ENCODE measurements at regions of chr14 and their contacts with region 1.

Region 1: DNA sequence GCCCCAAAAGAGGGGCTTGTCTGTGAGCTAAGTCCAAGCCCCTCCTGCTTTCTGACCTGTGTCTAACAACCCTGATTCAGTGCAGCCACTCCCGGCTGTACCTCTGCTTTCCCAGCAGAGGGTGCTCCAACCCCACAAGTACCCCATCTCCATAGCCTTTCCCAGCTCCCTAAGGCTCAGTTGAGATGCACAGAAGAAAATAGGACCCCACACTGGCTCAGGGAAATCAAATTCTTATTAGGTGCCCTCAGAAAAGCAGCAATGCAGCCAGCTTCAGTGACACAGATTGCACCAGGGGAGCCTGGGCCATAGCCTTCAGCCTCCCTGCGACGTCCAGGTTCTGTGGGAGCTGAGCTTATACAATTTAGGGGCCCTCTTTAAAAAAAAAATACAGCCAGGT is 49.9 kb downstream of the LRRC74A start:
- DNase-seq: peak; percentile 86
- H3K4me3 ChIP-seq: no peak overlapping the region; a peak in 1 of 4 replicates
- H3K27ac ChIP-seq: no peak overlapping the region
- H3K4me1 ChIP-seq: no peaks in the 10 kb centered on the region
- H3K27me3 ChIP-seq: 0 out of 2 replicates have a peak, but pooled peaks cover 4% of the 10 kb centered on the region
- CTCF ChIP-seq: peak; percentile 97
- EP300 ChIP-seq: no peak
- RAD21 ChIP-seq: peak; percentile 100

Region 2: DNA sequence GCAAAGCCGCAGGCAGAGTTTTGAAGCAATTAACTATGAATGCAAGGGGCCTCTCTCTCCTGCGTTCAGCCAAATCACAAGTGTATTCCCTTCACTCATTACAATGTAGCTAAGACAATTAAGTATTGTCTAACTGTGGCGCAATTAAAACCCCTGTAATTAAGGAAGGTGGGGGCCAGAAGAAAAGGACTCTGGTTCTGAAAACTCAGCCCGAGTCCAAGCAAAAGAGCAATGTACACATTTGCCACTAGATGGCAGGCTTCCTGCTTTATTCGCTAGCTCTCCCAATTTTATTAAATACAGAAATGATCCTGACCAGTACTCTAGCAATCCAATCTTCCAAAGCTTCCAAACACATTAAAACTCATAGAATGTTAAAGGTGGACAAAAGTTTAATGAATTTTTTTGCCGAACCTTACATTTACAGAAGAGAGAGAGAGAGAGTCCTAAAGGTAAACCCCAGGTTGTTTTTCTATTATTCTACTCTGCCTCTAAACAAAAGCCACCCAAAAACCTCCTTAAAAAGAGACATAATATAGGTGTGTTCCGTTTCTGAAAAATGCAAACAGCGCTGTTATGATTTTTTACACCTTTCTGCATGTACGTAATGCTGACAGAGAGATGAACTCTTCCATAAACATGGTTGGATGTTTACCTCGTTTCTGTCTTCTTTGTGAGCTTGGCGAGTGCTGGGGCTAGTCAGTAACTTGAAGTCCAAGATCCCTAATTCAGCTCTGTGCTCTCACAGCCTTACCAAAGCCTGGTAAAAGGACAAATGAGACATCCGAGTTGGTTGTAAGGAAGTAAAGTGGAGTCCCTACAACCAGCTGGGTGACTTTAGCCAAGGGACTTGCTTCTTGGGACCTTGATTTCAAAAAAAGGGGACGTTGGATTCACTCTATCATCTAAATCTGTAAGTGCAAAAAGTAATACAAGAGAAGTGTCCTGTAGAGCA is 165.7 kb before region 1 on chr14:
- CTCF ChIA-PET with region 1: interaction called, 14 read pairs
- POLR2A ChIA-PET with region 1: no interaction called
- DNase-seq: peak; percentile 68
- H3K4me3 ChIP-seq: no peak overlapping the region
- H3K27ac ChIP-seq: no peak overlapping the region
- H3K4me1 ChIP-seq: peaks cover 0 to 1% of the 10 kb centered on the region in 2 experiments; a peak in 1 of 4 replicates
- H3K27me3 ChIP-seq: no peaks in the 10 kb centered on the region; the same call in 1 of the 2 replicates
- CTCF ChIP-seq: peak; percentile 91
- EP300 ChIP-seq: no peak
- RAD21 ChIP-seq: peak; percentile 82

Region 3: DNA sequence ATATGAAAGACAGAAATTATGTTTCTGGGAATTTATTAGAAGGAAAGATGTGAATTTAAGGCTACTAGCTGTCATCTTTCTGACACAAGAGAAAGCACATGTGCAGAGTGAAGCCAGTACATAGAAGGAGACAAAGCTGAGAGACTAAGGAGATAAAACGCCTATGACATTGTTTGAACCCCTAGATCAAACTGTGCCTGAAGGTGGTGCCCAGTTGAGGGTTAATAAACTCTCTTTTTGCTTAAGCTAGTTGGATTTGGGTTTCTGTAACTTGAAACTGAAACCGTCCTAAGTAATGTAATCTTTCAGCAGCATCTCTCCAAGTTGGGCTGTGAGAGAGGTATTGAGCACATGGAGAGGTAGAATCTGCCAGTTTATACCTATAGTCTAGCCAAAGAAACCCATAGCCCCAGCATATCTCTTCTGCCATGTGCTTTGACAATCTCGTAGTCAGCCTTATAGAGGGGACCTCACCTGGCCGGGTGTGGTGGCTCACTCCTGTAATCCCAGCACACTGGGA is 34.4 kb after region 1 on chr14:
- CTCF ChIA-PET with region 1: interaction called, 102 read pairs
- POLR2A ChIA-PET with region 1: no interaction called
- DNase-seq: no peak
- H3K4me3 ChIP-seq: no peak overlapping the region
- H3K27ac ChIP-seq: no peak overlapping the region
- H3K4me1 ChIP-seq: peaks cover 13 to 17% of the 10 kb centered on the region in 2 experiments; a peak in 3 of 4 replicates
- H3K27me3 ChIP-seq: no peaks in the 10 kb centered on the region
- CTCF ChIP-seq: no peak
- EP300 ChIP-seq: no peak
- RAD21 ChIP-seq: no peak

Region 4: GRCh38 chr14:77053046-77053841 is 177.2 kb after region 1 on chr14:
- CTCF ChIA-PET with region 1: interaction called, 82 read pairs
- POLR2A ChIA-PET with region 1: no interaction called
- DNase-seq: peak; percentile 93
- H3K4me3 ChIP-seq: no peak overlapping the region; a peak in 1 of 4 replicates
- H3K27ac ChIP-seq: peak overlapping the region; percentile 10 to 70; a peak in 3 of 4 replicates
- H3K4me1 ChIP-seq: peaks cover 8 to 24% of the 10 kb centered on the region in 2 experiments; a peak in 2 of 4 replicates
- H3K27me3 ChIP-seq: no peaks in the 10 kb centered on the region
- CTCF ChIP-seq: peak; percentile 98
- EP300 ChIP-seq: no peak; a peak in 2 of 4 replicates
- RAD21 ChIP-seq: peak; percentile 96

Region 5: DNA sequence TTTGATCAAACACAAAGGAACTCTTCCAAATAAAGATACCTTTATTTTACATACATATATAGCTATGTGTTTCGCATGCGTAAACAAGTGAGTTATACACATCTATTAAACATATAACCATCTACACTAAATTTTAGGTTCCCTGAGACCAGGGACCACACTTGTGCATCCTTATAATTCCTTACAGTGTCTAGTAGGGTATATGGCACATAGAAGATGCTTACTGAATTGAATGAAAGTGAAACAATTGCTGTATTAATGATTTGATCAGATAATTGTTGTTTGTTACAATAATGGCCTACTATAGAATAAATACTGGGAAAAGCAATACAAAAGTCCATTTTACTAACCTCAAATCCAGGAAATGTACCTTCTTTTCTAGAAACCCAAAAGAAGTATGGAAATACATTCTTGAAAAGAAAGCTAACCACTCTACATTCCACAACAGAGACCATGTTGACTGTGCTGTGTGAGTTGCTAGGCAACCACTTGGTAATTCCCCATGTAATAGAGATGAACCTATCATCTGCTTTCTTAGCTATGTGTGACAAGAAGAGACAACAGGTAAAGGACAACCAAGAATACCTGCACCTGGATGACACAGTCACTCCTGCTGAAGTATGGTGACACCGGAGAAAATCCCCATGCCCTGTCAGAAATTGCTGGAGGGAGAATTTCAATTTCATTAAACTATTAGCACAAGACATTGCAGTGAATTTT is 210.1 kb after region 1 on chr14:
- CTCF ChIA-PET with region 1: interaction called, 309 read pairs
- POLR2A ChIA-PET with region 1: no interaction called
- DNase-seq: no peak
- H3K4me3 ChIP-seq: no peak overlapping the region
- H3K27ac ChIP-seq: no peak overlapping the region
- H3K4me1 ChIP-seq: peaks cover 0 to 5% of the 10 kb centered on the region in 2 experiments; a peak in 2 of 4 replicates
- H3K27me3 ChIP-seq: no peaks in the 10 kb centered on the region; the same call in 1 of the 2 replicates
- CTCF ChIP-seq: no peak
- EP300 ChIP-seq: no peak
- RAD21 ChIP-seq: no peak

Region 6: DNA sequence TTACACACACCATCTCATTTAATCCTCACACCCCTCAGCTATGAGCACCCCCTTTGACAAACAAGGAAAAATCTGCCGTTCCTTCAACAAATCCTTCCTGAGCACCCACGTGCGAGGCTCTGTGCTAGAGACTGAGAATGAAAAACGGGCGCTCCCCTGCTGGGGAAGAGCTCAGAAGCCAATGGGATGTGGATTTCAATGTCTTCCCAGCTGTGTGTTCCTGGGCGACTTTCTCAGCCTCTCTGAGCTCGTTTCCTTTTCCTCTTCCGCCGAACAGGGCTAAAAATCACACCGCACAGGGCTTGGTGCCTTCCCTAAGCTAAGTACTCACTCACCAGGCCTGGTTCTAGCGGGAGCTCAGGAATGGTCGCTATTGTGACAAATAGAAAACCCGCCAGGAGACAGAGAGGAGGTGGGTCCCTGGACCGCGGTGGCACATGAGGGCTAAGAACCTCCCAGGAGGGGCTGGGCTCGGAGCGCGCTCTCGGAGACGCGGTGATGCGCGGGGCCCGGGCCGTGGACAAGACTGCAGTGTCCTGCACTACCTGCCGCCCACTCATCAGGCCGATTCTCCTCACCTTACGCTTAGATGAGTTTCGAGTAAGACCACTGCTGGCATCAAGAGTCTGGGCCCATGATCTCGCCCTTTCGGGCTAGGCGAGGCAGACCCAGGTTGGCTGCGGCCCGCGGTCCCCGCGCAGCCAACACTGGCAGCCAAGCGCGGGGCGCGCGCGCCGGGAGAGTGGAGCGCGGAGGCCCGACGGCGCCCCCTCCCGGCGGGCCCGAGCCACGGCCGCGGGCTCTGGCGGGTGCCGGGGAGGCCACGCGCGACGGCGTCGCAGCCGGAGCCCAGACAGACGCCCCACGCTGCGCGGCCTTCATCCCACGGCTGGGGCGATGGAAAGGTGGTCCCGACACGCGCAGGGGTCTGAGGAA is 248.5 kb after region 1 on chr14:
- CTCF ChIA-PET with region 1: interaction called, 16 read pairs
- POLR2A ChIA-PET with region 1: no interaction called
- DNase-seq: peak; percentile 92
- H3K4me3 ChIP-seq: peak overlapping the region; percentile 53 to 58; a peak in 3 of 4 replicates
- H3K27ac ChIP-seq: no peak overlapping the region
- H3K4me1 ChIP-seq: peaks cover 0 to 20% of the 10 kb centered on the region in 2 experiments; a peak in 1 of 4 replicates
- H3K27me3 ChIP-seq: no peaks in the 10 kb centered on the region
- CTCF ChIP-seq: peak; percentile 53
- EP300 ChIP-seq: no peak
- RAD21 ChIP-seq: peak; percentile 15; the same call in 1 of the 2 replicates

Region 7: DNA sequence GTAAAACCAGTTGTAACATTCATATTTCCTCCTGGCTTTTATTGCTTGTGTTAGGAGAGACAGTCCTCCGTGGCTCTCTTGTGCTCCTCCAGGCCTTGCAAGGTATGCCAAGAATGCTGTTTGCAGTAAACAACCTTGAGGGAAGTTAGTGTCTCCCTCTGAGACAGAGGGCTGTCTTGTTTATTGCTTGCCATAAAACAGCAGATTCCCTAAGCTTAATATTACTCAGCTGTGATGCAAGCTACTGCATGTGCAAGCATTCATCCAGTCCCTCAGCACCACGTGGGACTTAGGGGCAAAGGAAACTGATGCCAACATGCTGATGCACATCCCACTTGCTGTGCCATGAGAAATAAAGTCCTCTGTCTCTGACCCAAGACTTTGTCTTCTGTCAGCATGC is 438.0 kb after region 1 on chr14:
- CTCF ChIA-PET with region 1: interaction called, 16 read pairs
- POLR2A ChIA-PET with region 1: no interaction called
- DNase-seq: no peak
- H3K4me3 ChIP-seq: no peak overlapping the region
- H3K27ac ChIP-seq: peak overlapping the region in 1 of 2 experiments; percentile 36; a peak in 1 of 4 replicates
- H3K4me1 ChIP-seq: peaks cover 7 to 18% of the 10 kb centered on the region in 2 experiments; a peak in 3 of 4 replicates
- H3K27me3 ChIP-seq: no peaks in the 10 kb centered on the region
- CTCF ChIP-seq: no peak
- EP300 ChIP-seq: no peak
- RAD21 ChIP-seq: no peak